ENCODE measurements at regions of chr10 and their contacts with region 1.

Region 1: GRCh38 chr10:103481974-103482531 is 3.0 kb upstream of the CALHM3 start:
- DNase-seq: peak; percentile 74
- ATAC-seq: peak; percentile 89
- H3K4me3 ChIP-seq: peak overlapping the region in 2 of 3 experiments; percentile 8 to 57; a peak in 4 of 6 replicates
- H3K27ac ChIP-seq: peak overlapping the region; percentile 26
- H3K4me1 ChIP-seq: peaks cover 18% of the 10 kb centered on the region; the same call in 1 of the 2 replicates
- H3K27me3 ChIP-seq: peaks cover 4 to 21% of the 10 kb centered on the region in 2 experiments
- CTCF ChIP-seq: peak; percentile 76
- EP300 ChIP-seq: no peak
- POLR2A ChIP-seq: no peak
- RAD21 ChIP-seq: no peak

Region 2: DNA sequence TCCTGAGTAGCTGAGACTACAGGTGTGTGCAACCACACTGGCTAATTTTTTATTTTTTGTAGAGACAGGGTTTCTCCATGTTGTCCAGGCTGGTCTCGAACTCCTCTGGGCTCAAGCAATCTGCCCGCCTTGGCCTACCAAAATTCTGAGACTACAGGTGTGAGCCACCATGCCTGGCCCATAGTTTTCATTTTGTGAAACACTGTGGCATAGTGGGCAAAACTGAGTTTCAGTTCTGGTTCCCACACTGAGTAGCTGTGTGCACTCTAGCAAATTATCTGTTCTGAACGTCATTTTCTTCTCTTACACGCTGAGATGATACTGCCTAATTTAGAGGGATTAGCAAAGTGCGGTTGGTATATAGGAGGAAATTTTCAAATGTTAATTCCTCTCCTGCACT is 99.3 kb before region 1 on chr10:
- CTCF ChIA-PET with region 1: no interaction called
- POLR2A ChIA-PET with region 1: no interaction called
- in situ Hi-C with region 1: no loop called
- intact Hi-C with region 1: no loop called
- DNase-seq: no peak
- ATAC-seq: no peak
- H3K4me3 ChIP-seq: no peak overlapping the region
- H3K27ac ChIP-seq: no peak overlapping the region
- H3K4me1 ChIP-seq: no peaks in the 10 kb centered on the region
- H3K27me3 ChIP-seq: no peaks in the 10 kb centered on the region
- CTCF ChIP-seq: no peak
- EP300 ChIP-seq: no peak
- POLR2A ChIP-seq: no peak
- RAD21 ChIP-seq: no peak

Region 3: GRCh38 chr10:103416436-103417147 is 65.5 kb before region 1 on chr10:
- CTCF ChIA-PET with region 1: interaction called, 14 read pairs
- POLR2A ChIA-PET with region 1: no interaction called
- in situ Hi-C with region 1: loop called (anchors 5 kb)
- intact Hi-C with region 1: loop called (anchors 1 kb)
- DNase-seq: peak; percentile 50
- ATAC-seq: peak; percentile 74
- H3K4me3 ChIP-seq: no peak overlapping the region
- H3K27ac ChIP-seq: no peak overlapping the region
- H3K4me1 ChIP-seq: no peaks in the 10 kb centered on the region
- H3K27me3 ChIP-seq: no peaks in the 10 kb centered on the region
- CTCF ChIP-seq: peak; percentile 67
- EP300 ChIP-seq: no peak
- POLR2A ChIP-seq: no peak
- RAD21 ChIP-seq: no peak

Region 4: GRCh38 chr10:103433858-103434257 is 48.2 kb before region 1 on chr10:
- CTCF ChIA-PET with region 1: no interaction called
- POLR2A ChIA-PET with region 1: no interaction called
- in situ Hi-C with region 1: no loop called
- intact Hi-C with region 1: loop called (anchors 5 kb)
- DNase-seq: no peak
- ATAC-seq: no peak
- H3K4me3 ChIP-seq: no peak overlapping the region
- H3K27ac ChIP-seq: no peak overlapping the region
- H3K4me1 ChIP-seq: peaks cover 13% of the 10 kb centered on the region
- H3K27me3 ChIP-seq: no peaks in the 10 kb centered on the region
- CTCF ChIP-seq: no peak
- EP300 ChIP-seq: no peak
- POLR2A ChIP-seq: no peak
- RAD21 ChIP-seq: no peak

Region 5: GRCh38 chr10:103592186-103593021 is 110.4 kb after region 1 on chr10:
- CTCF ChIA-PET with region 1: interaction called, 3 read pairs
- POLR2A ChIA-PET with region 1: no interaction called
- in situ Hi-C with region 1: no loop called
- intact Hi-C with region 1: loop called (anchors 10 kb)
- DNase-seq: peak; percentile 30
- ATAC-seq: peak; percentile 72
- H3K4me3 ChIP-seq: no peak overlapping the region
- H3K27ac ChIP-seq: no peak overlapping the region
- H3K4me1 ChIP-seq: peaks cover 9% of the 10 kb centered on the region
- H3K27me3 ChIP-seq: peaks cover 2 to 6% of the 10 kb centered on the region in 2 experiments; a peak in 1 of 5 replicates
- CTCF ChIP-seq: peak; percentile 88
- EP300 ChIP-seq: no peak
- POLR2A ChIP-seq: 0 out of 4 replicates have a peak, but pooled peaks of 1 of the 2 experiments have one; percentile 18
- RAD21 ChIP-seq: peak; percentile 64

Measured in HepG2 (cell line).